Right ventricle myocardium inferior (tissue), 1 donor: ENCODE measurements at regions of chr4 and their contacts with region 1.

Region 1: GRCh38 chr4:121252224-121252806 is 88.2 kb upstream of the TNIP3 start:
- DNase-seq: peak; percentile 72
- ATAC-seq: peak; percentile 64

Region 2: GRCh38 chr4:120156120-120156718 is 1096.1 kb before region 1 on chr4:
- intact Hi-C with region 1: loop called (anchors 2 kb)
- DNase-seq: no peak
- ATAC-seq: no peak

Region 3: GRCh38 chr4:121195649-121196048 is 56.7 kb before region 1 on chr4:
- intact Hi-C with region 1: loop called (anchors 2 kb)
- DNase-seq: no peak
- ATAC-seq: no peak